Endothelial cell of umbilical vein (primary cell): ENCODE measurements at regions of chr9 and their contacts with region 1.

Region 1: GRCh38 chr9:124617471-124618141 is 110.4 kb upstream of the NR5A1 start:
- DNase-seq: peak; percentile 75
- H3K4me3 ChIP-seq: no peak overlapping the region
- H3K27ac ChIP-seq: no peak overlapping the region
- H3K4me1 ChIP-seq: no peaks in the 10 kb centered on the region
- H3K27me3 ChIP-seq: peaks cover 0 to 8% of the 10 kb centered on the region in 2 experiments
- CTCF ChIP-seq: peak; percentile 82 to 89
- POLR2A ChIP-seq: no peak

Region 2: DNA sequence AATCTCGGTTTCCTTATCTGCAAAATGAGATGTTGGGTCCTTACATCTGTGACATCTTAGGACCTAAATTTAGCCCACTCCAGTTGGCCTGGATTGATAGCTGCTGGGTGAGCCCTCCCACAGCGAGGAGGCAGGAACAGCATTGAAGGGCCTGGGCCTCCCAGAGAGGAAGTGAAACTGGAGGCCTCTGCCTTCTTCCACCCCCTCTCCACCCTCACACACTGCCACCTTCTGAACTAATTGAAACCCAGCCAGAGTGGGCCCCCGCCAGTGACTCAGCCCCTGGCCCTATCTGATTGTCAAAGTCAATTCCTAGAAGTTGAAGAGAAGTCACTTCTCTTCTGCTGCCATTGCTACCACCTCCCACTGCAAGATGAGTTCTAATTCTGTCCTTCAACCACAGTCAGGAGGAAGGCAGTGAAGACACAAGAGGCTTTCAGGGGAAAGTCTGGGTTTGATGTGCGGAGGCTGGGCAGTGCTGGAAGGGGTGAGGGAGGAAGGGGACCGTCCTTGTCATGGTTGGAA is 415.1 kb before region 1 on chr9:
- CTCF ChIA-PET with region 1: no interaction called
- POLR2A ChIA-PET with region 1: no interaction called
- dilution Hi-C with region 1: no loop called
- intact Hi-C with region 1: no loop called
- DNase-seq: peak; percentile 44
- H3K4me3 ChIP-seq: no peak overlapping the region
- H3K27ac ChIP-seq: no peak overlapping the region
- H3K4me1 ChIP-seq: peaks cover 2% of the 10 kb centered on the region
- H3K27me3 ChIP-seq: peaks cover 6 to 11% of the 10 kb centered on the region in 2 experiments
- CTCF ChIP-seq: no peak
- POLR2A ChIP-seq: no peak

Region 3: GRCh38 chr9:124270504-124271335 is 346.9 kb before region 1 on chr9:
- CTCF ChIA-PET with region 1: no interaction called
- POLR2A ChIA-PET with region 1: no interaction called
- dilution Hi-C with region 1: no loop called
- intact Hi-C with region 1: no loop called
- DNase-seq: peak; percentile 49
- H3K4me3 ChIP-seq: no peak overlapping the region
- H3K27ac ChIP-seq: peak overlapping the region; percentile 34
- H3K4me1 ChIP-seq: peaks cover 49% of the 10 kb centered on the region
- H3K27me3 ChIP-seq: no peaks in the 10 kb centered on the region
- CTCF ChIP-seq: no peak
- POLR2A ChIP-seq: no peak

Region 4: GRCh38 chr9:124595743-124596142 is 21.9 kb before region 1 on chr9:
- CTCF ChIA-PET with region 1: interaction called, 15 read pairs
- POLR2A ChIA-PET with region 1: no interaction called
- dilution Hi-C with region 1: no loop called
- intact Hi-C with region 1: no loop called
- DNase-seq: no peak
- H3K4me3 ChIP-seq: no peak overlapping the region
- H3K27ac ChIP-seq: no peak overlapping the region
- H3K4me1 ChIP-seq: no peaks in the 10 kb centered on the region
- H3K27me3 ChIP-seq: peaks cover 32% of the 10 kb centered on the region in 2 experiments
- CTCF ChIP-seq: no peak
- POLR2A ChIP-seq: no peak

Region 5: DNA sequence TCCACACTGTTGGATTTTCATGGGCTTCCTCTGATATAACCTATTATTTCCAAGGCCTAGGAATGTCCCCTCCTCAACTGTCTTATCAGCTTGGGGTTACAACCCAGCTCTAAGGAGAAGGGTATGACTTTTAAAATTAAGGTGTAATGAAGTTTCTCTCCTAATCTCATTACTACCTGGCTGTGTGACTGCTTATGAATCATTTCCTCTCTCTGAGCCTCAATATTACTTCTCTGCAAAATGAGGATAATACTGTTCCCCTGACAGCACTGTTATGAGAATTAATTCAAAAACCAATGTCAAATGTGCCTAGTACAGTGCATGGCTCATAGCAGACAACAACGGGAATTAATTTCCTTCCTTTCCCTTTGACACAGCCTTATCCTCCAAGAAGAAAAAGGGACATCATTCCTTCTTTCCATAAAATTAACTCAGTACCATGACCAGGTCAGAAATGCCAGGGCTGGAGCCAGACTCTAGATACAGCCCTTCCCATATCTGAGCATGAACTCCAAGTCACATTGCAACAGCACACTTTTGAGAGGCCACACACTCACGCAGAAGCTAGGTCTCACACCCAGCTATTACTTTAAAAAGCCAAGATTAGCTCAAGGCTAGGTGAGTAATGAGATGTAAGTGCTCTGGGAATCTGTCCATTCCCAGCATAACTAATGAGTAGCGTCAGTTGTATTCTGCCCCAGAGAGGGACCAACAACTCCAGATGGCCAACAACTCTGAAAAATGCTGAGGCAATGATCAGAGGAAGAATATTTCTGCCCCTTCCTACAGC is 34.8 kb after region 1 on chr9:
- CTCF ChIA-PET with region 1: interaction called, 18 read pairs
- POLR2A ChIA-PET with region 1: no interaction called
- dilution Hi-C with region 1: no loop called
- intact Hi-C with region 1: no loop called
- DNase-seq: no peak
- H3K4me3 ChIP-seq: no peak overlapping the region
- H3K27ac ChIP-seq: no peak overlapping the region
- H3K4me1 ChIP-seq: no peaks in the 10 kb centered on the region
- H3K27me3 ChIP-seq: no peaks in the 10 kb centered on the region
- CTCF ChIP-seq: no peak
- POLR2A ChIP-seq: no peak

Region 6: DNA sequence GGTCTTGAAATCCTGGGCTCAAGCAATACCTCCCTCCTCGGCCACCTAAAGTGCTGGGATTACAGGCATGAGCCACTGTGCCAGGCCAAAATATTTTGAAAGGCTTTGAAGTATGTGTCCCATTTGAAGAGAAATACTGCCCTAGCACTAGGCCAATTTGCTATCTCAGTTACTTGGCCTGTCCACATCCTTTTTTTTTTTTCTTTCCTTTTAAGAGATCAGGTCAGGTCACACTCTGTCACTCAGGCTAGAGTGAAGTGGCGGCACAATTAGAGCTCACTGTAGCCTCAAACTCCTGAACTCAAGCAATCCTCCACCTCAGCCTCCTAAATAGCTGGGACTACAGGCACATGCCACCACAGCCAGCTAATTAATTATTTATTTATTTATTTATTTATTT is 69.3 kb after region 1 on chr9:
- CTCF ChIA-PET with region 1: interaction called, 22 read pairs
- POLR2A ChIA-PET with region 1: no interaction called
- dilution Hi-C with region 1: no loop called
- intact Hi-C with region 1: no loop called
- DNase-seq: no peak
- H3K4me3 ChIP-seq: no peak overlapping the region
- H3K27ac ChIP-seq: no peak overlapping the region
- H3K4me1 ChIP-seq: no peaks in the 10 kb centered on the region
- H3K27me3 ChIP-seq: no peaks in the 10 kb centered on the region
- CTCF ChIP-seq: no peak
- POLR2A ChIP-seq: no peak

Region 7: GRCh38 chr9:124726886-124727285 is 109.3 kb after region 1 on chr9:
- CTCF ChIA-PET with region 1: interaction called, 439 read pairs
- POLR2A ChIA-PET with region 1: no interaction called
- dilution Hi-C with region 1: no loop called
- intact Hi-C with region 1: no loop called
- DNase-seq: no peak
- H3K4me3 ChIP-seq: no peak overlapping the region
- H3K27ac ChIP-seq: no peak overlapping the region
- H3K4me1 ChIP-seq: no peaks in the 10 kb centered on the region
- H3K27me3 ChIP-seq: no peaks in the 10 kb centered on the region
- CTCF ChIP-seq: no peak
- POLR2A ChIP-seq: no peak

Region 8: DNA sequence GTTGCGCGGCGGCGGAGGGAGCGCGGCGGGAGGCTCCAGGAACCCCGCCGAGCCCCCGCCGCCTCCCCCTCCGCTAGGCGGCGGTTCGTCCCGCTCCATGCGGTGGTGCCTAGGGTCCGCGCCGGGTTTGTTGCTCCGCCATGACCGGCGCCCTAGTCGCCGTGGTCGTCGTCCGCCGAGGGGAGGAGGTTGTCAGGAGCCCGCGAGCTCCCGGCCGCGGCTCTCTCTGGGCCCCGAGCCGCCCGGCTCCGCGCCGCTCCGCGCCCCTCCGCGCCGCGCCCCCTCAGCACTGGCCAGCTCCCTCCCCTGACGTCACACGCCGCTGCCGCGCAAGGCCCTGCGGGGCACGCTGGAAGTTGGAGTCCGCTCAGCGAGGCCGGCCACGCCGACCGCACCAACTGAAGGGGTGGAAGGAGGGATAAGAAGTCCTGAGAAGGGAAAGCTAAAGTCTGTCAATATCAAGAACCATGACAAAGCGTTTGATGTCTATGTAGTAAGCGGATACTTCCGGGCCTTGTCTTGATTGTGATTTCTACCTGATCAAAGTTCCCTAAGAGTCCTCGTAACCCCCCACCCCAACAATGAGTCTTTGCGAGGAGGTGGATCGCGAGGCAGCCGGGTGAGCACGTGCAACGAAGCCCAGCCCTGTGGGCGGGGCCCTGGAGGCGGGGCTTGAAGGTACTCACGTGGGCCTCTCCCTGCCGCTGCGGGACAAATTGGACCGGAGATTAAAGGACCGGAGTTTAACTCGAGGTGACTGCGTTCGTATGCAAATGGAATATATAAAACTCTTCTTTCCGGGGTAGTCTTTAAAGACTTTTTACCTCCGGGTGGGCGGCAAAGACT is 153.6 kb after region 1 on chr9 and contains the start of gene NR6A1:
- CTCF ChIA-PET with region 1: interaction called, 82 read pairs
- POLR2A ChIA-PET with region 1: no interaction called
- dilution Hi-C with region 1: no loop called
- intact Hi-C with region 1: loop called (anchors 1 kb)
- DNase-seq: peak; percentile 96
- H3K4me3 ChIP-seq: peak within 1 kb of the TSS; percentile 29 to 62 (median 54)
- H3K27ac ChIP-seq: peak within 1 kb of the TSS; percentile 69
- H3K4me1 ChIP-seq: peaks cover 10% of the 10 kb centered on the region
- H3K27me3 ChIP-seq: peaks cover 36 to 42% of the 10 kb centered on the region in 2 experiments
- CTCF ChIP-seq: peak; percentile 26 to 36
- POLR2A ChIP-seq: no peak
- total RNA-seq, gene NR6A1: 0.32 and 1.2 TPM in 2 replicates

Region 9: GRCh38 chr9:124960409-124960752 is 342.8 kb after region 1 on chr9:
- CTCF ChIA-PET with region 1: no interaction called
- POLR2A ChIA-PET with region 1: no interaction called
- dilution Hi-C with region 1: no loop called
- intact Hi-C with region 1: no loop called
- DNase-seq: no peak
- H3K4me3 ChIP-seq: no peak overlapping the region
- H3K27ac ChIP-seq: no peak overlapping the region
- H3K4me1 ChIP-seq: no peaks in the 10 kb centered on the region
- H3K27me3 ChIP-seq: no peaks in the 10 kb centered on the region
- CTCF ChIP-seq: no peak
- POLR2A ChIP-seq: no peak

Region 10: GRCh38 chr9:125529589-125530515 is 912.2 kb after region 1 on chr9:
- CTCF ChIA-PET with region 1: no interaction called
- POLR2A ChIA-PET with region 1: no interaction called
- dilution Hi-C with region 1: no loop called
- intact Hi-C with region 1: no loop called
- DNase-seq: no peak
- H3K4me3 ChIP-seq: no peak overlapping the region
- H3K27ac ChIP-seq: no peak overlapping the region
- H3K4me1 ChIP-seq: peaks cover 15% of the 10 kb centered on the region
- H3K27me3 ChIP-seq: no peaks in the 10 kb centered on the region
- CTCF ChIP-seq: no peak
- POLR2A ChIP-seq: no peak